ENCODE measurements at regions of chr3 and their contacts with region 1.

Region 1: DNA sequence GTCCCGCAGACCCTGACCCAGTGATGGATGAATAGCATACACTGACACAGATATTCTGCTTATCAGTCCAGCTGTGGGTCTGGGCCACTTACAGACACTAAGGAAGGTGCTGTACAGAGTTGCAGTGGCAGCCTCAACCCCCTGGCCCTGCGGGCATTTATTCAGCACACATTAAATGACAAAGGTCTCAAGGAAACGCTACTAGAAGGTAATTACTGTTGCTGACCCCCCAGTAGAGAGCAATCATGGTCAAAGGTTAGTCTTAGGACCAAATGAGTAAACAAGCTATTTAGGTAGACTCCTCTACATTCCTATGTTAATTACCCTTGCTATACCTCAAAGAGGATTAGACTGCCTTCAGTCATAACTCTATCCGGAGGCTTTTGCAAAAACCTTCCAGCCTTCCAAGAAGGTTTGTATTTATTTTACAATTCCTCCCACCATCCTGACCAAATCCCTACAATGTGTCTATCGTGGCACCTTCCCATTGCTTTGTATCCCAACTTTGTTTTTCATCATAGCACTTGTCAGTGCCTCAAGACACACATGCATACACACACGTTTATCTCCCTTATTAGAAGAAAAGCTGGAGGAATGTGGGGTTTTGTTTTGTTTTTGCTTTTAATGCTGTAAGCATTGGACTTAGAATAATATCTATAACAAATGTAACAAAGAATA is 227.9 kb downstream of the PYDC2 start:
- DNase-seq: no peak
- ATAC-seq: no peak
- H3K4me3 ChIP-seq: no peak overlapping the region
- H3K4me3 Mint-ChIP-seq: no peak overlapping the region
- H3K27ac ChIP-seq: no peak overlapping the region
- H3K27ac Mint-ChIP-seq: no peak overlapping the region
- H3K4me1 ChIP-seq: no peaks in the 10 kb centered on the region
- H3K4me1 Mint-ChIP-seq: no peaks in the 10 kb centered on the region
- H3K27me3 ChIP-seq: no peaks in the 10 kb centered on the region
- H3K27me3 Mint-ChIP-seq: no peaks in the 10 kb centered on the region

Region 2: GRCh38 chr3:191721990-191722389 is 33.1 kb after region 1 on chr3:
- CTCF ChIA-PET with region 1: no interaction called
- POLR2A ChIA-PET with region 1: no interaction called
- intact Hi-C with region 1: loop called in 1 of 2 experiments (anchors 1 kb)
- DNase-seq: no peak
- ATAC-seq: no peak
- H3K4me3 ChIP-seq: no peak overlapping the region
- H3K4me3 Mint-ChIP-seq: no peak overlapping the region
- H3K27ac ChIP-seq: no peak overlapping the region
- H3K27ac Mint-ChIP-seq: no peak overlapping the region
- H3K4me1 ChIP-seq: no peaks in the 10 kb centered on the region
- H3K4me1 Mint-ChIP-seq: no peaks in the 10 kb centered on the region
- H3K27me3 ChIP-seq: no peaks in the 10 kb centered on the region
- H3K27me3 Mint-ChIP-seq: no peaks in the 10 kb centered on the region

Region 3: GRCh38 chr3:192433704-192434103 is 744.8 kb after region 1 on chr3:
- CTCF ChIA-PET with region 1: no interaction called
- POLR2A ChIA-PET with region 1: no interaction called
- intact Hi-C with region 1: no loop called
- DNase-seq: no peak
- ATAC-seq: no peak
- H3K4me3 ChIP-seq: no peak overlapping the region
- H3K4me3 Mint-ChIP-seq: no peak overlapping the region
- H3K27ac ChIP-seq: no peak overlapping the region
- H3K27ac Mint-ChIP-seq: no peak overlapping the region
- H3K4me1 ChIP-seq: no peaks in the 10 kb centered on the region
- H3K4me1 Mint-ChIP-seq: no peaks in the 10 kb centered on the region
- H3K27me3 ChIP-seq: no peaks in the 10 kb centered on the region
- H3K27me3 Mint-ChIP-seq: peaks cover 0 to 19% (median 11%) of the 10 kb centered on the region in 5 donors

Measured in naive thymus-derived CD4-positive, alpha-beta T cell (primary cell).